ENCODE measurements at regions of chr9 and their contacts with region 1.

Region 1: DNA sequence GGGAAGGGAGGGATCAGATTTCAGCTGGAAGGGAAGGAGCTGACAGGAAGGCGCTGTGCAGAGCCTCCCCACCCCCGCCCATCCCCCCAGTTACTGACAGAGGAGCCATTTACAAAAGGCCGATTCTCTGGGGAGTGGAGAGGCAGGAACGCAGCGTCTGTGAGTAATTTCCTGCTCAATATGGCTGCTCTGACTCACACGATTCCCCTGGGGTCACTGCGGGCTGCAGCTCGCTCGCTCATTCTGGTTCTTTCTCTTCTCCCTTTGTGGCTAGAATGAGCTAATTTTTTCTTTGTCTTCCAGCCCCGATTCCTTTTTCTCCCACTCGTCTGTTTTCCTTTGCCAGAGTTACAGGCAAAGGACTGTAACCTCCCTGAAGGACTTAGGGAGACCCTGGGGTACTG is 28.8 kb downstream of the PTPA start:
- H3K4me3 Mint-ChIP-seq: peak overlapping the region; percentile 77
- H3K27ac Mint-ChIP-seq: peak overlapping the region; percentile 96
- H3K4me1 Mint-ChIP-seq: peaks cover 59% of the 10 kb centered on the region
- H3K27me3 Mint-ChIP-seq: no peaks in the 10 kb centered on the region

Region 2: DNA sequence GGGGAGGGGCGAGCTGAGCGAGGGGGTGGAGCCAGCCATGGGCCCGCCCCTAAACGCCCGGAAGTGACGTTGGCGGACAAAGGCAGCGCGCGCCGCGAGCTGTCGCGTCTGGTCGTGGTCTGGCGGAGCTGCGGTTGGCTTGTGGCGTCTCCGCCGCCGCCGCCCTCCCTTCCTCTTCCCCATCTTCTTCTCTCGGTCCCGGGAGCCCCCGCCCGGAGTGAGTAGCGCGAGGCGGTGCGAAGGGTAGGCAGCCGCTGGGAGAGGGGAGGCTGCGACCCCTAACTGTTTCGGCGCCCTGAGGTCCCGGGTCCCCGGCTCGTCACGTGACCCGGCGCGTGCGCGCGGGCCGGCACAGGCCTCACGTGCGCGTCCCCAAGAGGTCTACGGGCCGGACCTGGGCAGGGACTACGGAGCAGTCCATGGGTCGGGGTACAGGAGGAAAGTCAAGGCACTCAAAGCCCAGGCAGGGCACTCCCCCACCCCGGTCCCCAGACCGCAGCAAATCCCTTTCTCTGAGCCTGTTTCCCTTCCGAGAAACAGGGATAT is 486.2 kb after region 1 on chr9 and contains the start of gene NTMT1:
- intact Hi-C with region 1: loop called (anchors 1 kb)
- H3K4me3 Mint-ChIP-seq: peak within 1 kb of the TSS; percentile 86
- H3K27ac Mint-ChIP-seq: peak within 1 kb of the TSS; percentile 96
- H3K4me1 Mint-ChIP-seq: peaks cover 71% of the 10 kb centered on the region
- H3K27me3 Mint-ChIP-seq: peaks cover 7% of the 10 kb centered on the region

Measured in dendritic cell treated with granulocyte-macrophage colony-stimulating factor and Interleukin-4, amounts not matched to agents 40 ng/mL and 50 ng/mL, for 4 days (primary cell).